WTC11 (cell line): ENCODE measurements at regions of chr17 and their contacts with region 1.

Region 1: GRCh38 chr17:1055751-1056645 is 59.1 kb downstream of the TIMM22 start:
- DNase-seq: peak; percentile 84
- ATAC-seq: peak; percentile 91
- H3K4me3 Mint-ChIP-seq: no peak overlapping the region
- H3K27ac Mint-ChIP-seq: no peak overlapping the region
- H3K4me1 Mint-ChIP-seq: no peaks in the 10 kb centered on the region
- H3K27me3 Mint-ChIP-seq: no peaks in the 10 kb centered on the region
- CTCF ChIP-seq: peak; percentile 73

Region 2: DNA sequence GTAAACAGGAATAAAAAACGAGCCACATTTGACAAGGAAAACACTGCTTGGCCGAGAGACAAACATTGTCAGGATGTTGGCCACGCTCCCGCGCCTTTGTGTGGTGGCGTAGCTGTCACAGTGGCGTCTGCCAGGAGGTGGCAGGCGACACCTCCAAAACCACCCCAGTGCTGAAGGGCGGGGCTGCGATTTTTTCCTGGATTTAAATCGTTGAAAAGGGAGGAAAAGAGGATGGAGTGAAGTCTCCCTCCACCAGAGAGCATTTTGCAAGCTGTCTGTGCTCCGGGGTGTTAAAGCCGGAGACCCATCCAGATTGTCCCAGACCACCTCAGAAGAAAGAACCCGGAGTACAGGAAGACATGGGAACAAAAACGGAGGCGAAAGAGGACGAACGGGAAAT is 261.1 kb before region 1 on chr17:
- CTCF ChIA-PET with region 1: interaction called, 17 read pairs
- POLR2A ChIA-PET with region 1: no interaction called
- DNase-seq: peak; percentile 81
- ATAC-seq: peak; percentile 60
- H3K4me3 Mint-ChIP-seq: no peak overlapping the region
- H3K27ac Mint-ChIP-seq: peak overlapping the region; percentile 92
- H3K4me1 Mint-ChIP-seq: peaks cover 10% of the 10 kb centered on the region
- H3K27me3 Mint-ChIP-seq: no peaks in the 10 kb centered on the region
- CTCF ChIP-seq: peak; percentile 50

Region 3: DNA sequence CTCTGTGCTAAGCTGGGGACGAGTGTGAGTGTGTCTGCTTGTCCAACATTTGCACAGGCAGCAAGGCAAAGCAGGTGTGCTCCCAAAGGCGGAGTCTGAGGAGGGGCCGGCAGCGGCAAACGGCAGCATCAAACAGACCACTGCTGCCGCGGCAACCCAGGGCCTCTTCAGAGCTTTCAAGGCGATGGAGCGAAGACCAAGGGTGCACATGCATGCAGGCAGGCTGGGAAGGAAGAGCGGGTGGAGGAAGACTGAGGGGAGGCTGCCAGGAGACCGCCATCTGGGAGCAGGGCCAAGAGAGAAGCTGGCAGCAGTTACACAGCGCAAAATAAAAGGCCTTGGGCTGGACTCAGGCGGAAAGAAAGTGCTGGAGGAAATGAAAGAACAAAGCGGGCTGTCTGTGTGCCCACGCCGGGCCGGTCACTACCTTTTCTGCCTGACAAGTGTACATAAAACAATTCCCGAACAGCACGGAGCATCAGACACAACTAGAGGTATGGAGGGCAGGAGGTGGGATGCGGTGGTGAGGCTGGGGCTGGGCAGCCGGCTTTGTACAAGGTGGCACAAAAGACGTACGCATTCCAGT is 50.5 kb before region 1 on chr17:
- CTCF ChIA-PET with region 1: interaction called, 56 read pairs
- POLR2A ChIA-PET with region 1: interaction called, 3 read pairs
- DNase-seq: no peak
- ATAC-seq: no peak; the same call in 1 of the 2 replicates
- H3K4me3 Mint-ChIP-seq: no peak overlapping the region
- H3K27ac Mint-ChIP-seq: peak overlapping the region; percentile 88
- H3K4me1 Mint-ChIP-seq: peaks cover 7% of the 10 kb centered on the region
- H3K27me3 Mint-ChIP-seq: no peaks in the 10 kb centered on the region
- CTCF ChIP-seq: no peak

Region 4: DNA sequence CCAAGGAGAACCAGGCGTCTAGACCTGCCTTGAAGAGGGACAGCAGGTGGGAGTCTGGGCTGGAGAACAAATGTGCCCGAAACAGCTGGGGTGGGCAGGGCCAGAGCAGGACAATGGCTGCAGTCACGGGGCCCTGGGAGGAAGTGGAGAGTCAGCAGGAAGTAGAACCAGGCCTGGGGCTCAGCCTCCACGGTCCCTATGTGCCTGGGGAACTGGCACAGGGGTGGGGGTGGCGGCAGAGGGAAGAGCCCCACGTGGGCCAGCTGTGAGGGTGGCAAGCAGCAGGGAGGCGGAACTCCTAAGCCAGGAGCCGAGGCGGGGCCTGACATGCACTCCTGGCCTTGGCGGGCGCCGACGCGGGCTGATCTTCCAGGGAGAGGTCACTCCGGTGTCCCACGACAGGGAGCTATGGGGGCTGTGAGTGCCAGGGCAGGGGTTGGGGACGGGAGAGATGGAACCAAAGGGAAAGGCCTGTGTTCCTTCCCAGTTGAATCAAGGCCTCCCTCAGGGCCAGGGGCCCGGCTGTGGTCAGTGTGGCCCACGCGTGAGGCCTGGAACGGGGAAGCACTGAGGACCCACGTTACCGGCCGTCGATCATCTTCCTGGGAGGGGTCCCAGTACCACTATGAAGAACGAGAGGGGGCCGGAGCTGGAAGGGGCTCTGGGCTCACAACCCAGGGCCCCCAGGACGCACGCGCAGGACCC is 16.3 kb before region 1 on chr17:
- CTCF ChIA-PET with region 1: interaction called, 39 read pairs
- POLR2A ChIA-PET with region 1: interaction called, 3 read pairs
- DNase-seq: no peak
- ATAC-seq: peak; percentile 38
- H3K4me3 Mint-ChIP-seq: no peak overlapping the region
- H3K27ac Mint-ChIP-seq: peak overlapping the region; percentile 63; the same call in 1 of the 2 replicates
- H3K4me1 Mint-ChIP-seq: peaks cover 5% of the 10 kb centered on the region
- H3K27me3 Mint-ChIP-seq: no peaks in the 10 kb centered on the region
- CTCF ChIP-seq: no peak

Region 5: DNA sequence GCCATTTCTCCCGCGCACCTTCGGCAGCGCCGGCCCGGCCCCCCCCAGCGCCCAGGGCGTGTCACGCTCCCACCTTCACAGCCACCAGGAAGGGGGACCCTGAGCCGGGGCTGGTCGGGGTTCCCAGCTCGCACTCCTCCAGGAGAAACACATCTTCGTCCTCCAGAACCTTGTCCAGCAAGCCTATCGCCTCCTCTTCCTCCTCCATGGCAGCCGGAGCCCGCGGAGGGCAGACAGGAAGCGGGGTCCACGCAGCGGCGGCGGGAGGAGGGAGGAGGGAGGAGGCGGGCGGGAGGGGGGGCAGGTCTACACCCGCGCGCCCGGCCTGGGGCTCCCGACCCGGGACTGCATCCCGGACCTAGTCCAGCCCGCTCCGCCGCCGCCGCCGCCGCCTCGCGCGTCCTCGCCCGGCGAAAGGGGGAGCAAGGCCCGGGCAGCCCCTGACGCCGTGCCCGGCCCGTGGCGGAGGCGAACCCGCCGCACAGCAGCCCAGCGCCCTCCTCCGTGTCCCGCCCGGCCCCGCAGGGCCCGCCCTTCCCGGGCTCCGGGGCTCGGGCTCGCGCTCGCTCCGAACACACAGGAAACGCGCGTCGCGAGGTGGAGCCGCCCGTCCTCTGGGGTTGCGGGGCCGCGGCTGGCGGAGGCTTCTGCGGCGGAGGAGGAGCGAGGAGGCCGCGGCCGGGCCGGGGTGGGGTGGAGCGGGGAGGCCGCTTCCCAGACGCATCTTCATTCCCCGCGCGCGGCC is 53.0 kb after region 1 on chr17:
- CTCF ChIA-PET with region 1: interaction called, 18 read pairs
- POLR2A ChIA-PET with region 1: no interaction called
- DNase-seq: peak; percentile 38
- ATAC-seq: peak; percentile 11
- H3K4me3 Mint-ChIP-seq: peak overlapping the region; percentile 72
- H3K27ac Mint-ChIP-seq: no peak overlapping the region
- H3K4me1 Mint-ChIP-seq: peaks cover 32% of the 10 kb centered on the region
- H3K27me3 Mint-ChIP-seq: peaks cover 12% of the 10 kb centered on the region
- CTCF ChIP-seq: no peak

Region 6: DNA sequence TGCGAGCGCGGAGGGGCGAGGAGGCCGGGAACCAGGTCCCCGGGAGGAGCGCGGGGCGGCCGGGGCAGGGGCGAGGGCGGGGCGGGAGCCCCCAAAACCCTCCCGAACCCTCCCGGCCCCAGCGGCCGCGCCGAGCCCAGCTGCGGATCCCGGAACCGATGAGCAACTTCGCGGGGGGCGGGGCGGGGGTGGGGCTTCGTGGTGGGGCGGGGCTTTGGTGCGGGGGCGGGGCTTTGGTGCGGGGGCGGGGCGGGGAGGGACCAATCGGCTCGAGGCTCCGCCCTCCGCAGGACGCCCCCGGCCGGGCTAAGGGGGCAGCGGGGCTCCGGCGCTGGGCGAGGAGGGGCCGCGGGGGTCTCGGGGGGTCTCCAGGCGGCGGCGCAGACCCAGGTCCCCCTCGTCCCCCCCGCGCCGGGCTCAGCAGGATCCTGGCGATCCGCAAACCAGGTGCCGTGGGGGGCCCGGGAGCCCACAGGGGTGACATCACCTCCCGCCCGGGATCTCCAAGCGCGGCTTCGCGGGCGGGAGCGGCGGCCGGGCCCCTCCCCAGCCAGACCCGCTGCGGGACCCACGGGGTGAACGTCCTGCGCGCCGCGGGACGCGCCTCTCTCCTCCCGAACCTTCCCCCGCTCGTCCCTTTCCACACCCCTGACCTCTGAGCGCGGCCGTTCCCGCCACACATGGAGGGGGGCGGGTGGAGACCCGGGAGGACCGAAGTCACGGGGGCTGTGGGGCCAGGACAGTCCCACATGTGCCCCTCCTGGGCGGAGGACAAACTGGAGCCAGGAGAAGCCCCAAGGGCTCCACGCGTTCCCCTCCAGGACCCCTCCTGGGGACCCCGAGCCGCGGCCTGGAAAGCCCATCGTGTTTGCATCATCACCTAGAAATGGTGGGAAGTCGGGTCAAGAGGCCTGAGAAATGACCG is 124.1 kb after region 1 on chr17 and contains the start of gene ABR:
- CTCF ChIA-PET with region 1: interaction called, 16 read pairs
- POLR2A ChIA-PET with region 1: no interaction called
- DNase-seq: peak; percentile 74
- ATAC-seq: peak; percentile 43
- H3K4me3 Mint-ChIP-seq: peak within 1 kb of the TSS; percentile 77
- H3K27ac Mint-ChIP-seq: no peak within 1 kb of the TSS
- H3K4me1 Mint-ChIP-seq: peaks cover 20% of the 10 kb centered on the region
- H3K27me3 Mint-ChIP-seq: peaks cover 43% of the 10 kb centered on the region
- CTCF ChIP-seq: no peak
- total RNA-seq, gene ABR: 38.0 to 43.7 TPM (median 41.0 TPM) in 3 replicates